Colonic mucosa (tissue), 4 donors: ENCODE measurements at regions of chr2 and their contacts with region 1.

Region 1: GRCh38 chr2:170873035-170873692 is 55.9 kb upstream of the GORASP2 start:
- DNase-seq: peak; percentile 72
- H3K4me3 ChIP-seq: peak overlapping the region; percentile 9
- H3K27ac ChIP-seq: no peak overlapping the region
- H3K4me1 ChIP-seq: no peaks in the 10 kb centered on the region
- H3K27me3 ChIP-seq: no peaks in the 10 kb centered on the region
- CTCF ChIP-seq: peak; percentile 89

Region 2: DNA sequence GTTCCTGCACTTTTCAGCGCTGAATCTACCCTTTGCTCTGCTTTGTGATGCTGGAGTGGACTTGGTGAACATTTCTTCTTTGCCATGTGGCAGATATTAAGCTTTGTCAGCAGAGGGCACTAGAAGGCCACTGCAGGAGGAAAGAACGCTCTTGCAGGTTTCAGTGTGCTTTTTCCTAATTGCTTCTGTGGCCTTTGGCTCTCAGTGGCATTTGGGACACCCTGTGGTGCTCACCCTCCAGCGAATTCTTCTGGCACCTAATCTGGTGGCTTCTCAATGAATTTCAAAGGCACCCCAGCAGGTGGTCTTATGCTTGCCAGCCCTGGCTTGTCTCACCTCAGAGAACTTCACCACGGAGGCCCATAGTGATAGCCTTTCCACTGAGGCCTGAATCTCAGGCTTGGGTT is 548.5 kb before region 1 on chr2:
- intact Hi-C with region 1: loop called (anchors 5 kb)
- DNase-seq: peak; percentile 22
- H3K4me3 ChIP-seq: no peak overlapping the region
- H3K27ac ChIP-seq: no peak overlapping the region
- H3K4me1 ChIP-seq: no peaks in the 10 kb centered on the region
- H3K27me3 ChIP-seq: no peaks in the 10 kb centered on the region
- CTCF ChIP-seq: peak; percentile 55

Region 3: GRCh38 chr2:170761572-170761971 is 111.6 kb before region 1 on chr2:
- intact Hi-C with region 1: no loop called
- DNase-seq: no peak
- H3K4me3 ChIP-seq: no peak overlapping the region
- H3K27ac ChIP-seq: no peak overlapping the region
- H3K4me1 ChIP-seq: no peaks in the 10 kb centered on the region
- H3K27me3 ChIP-seq: no peaks in the 10 kb centered on the region
- CTCF ChIP-seq: no peak